Transverse colon (tissue), 4 donors: ENCODE measurements at regions of chr2 and their contacts with region 1.

Region 1: DNA sequence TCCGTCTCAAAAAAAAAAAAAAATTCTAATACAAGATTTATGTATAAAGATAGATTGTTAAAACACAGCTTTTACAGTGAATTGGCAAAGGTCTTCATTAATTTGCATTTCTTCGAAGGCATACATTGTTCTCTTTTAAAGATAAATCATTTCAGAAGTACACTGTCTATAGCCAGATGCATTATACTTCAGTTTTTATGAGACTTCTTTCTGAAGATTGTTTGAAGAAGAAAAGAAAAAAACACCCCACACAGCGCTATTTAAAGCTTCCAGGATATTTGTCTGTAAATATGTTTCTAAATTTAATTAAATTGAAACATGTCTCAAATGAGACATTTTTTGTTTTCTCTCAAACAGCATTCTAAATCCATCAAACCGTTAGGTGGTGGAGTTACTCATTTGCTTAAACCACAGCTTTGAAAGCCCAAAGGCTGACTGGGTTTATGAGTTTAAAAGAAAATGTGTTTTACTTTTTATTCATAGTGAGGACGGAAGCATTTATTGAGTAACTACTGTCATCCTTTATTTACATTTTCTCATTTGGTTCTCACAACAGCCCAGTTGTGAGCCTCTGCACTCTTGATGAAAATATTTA is 42.4 kb upstream of the C1GALT1C1L start:
- DNase-seq: no peak
- H3K4me3 ChIP-seq: no peak overlapping the region
- H3K27ac ChIP-seq: no peak overlapping the region
- H3K4me1 ChIP-seq: no peaks in the 10 kb centered on the region
- H3K27me3 ChIP-seq: no peaks in the 10 kb centered on the region
- CTCF ChIP-seq: no peak
- EP300 ChIP-seq: no peak
- POLR2A ChIP-seq: no peak

Region 2: GRCh38 chr2:43701111-43701510 is 17.5 kb before region 1 on chr2:
- in situ Hi-C with region 1: no loop called
- intact Hi-C with region 1: loop called (anchors 1 kb)
- DNase-seq: no peak
- H3K4me3 ChIP-seq: no peak overlapping the region
- H3K27ac ChIP-seq: no peak overlapping the region
- H3K4me1 ChIP-seq: no peaks in the 10 kb centered on the region
- H3K27me3 ChIP-seq: no peaks in the 10 kb centered on the region
- CTCF ChIP-seq: no peak
- EP300 ChIP-seq: no peak
- POLR2A ChIP-seq: no peak